Pancreas (tissue), 10 donors: ENCODE measurements at regions of chr10 and their contacts with region 1.

Region 1: GRCh38 chr10:102583435-102584417 is 60.6 kb upstream of the TRIM8 start:
- DNase-seq: peak; percentile 67 to 89 (median 86)
- ATAC-seq: peak; percentile 91 to 99 (median 96)
- H3K4me3 ChIP-seq: no peak overlapping the region
- H3K27ac ChIP-seq: no peak overlapping the region
- H3K4me1 ChIP-seq: no peaks in the 10 kb centered on the region
- H3K27me3 ChIP-seq: no peaks in the 10 kb centered on the region
- CTCF ChIP-seq: peak; percentile 76 to 85 (median 80)

Region 2: DNA sequence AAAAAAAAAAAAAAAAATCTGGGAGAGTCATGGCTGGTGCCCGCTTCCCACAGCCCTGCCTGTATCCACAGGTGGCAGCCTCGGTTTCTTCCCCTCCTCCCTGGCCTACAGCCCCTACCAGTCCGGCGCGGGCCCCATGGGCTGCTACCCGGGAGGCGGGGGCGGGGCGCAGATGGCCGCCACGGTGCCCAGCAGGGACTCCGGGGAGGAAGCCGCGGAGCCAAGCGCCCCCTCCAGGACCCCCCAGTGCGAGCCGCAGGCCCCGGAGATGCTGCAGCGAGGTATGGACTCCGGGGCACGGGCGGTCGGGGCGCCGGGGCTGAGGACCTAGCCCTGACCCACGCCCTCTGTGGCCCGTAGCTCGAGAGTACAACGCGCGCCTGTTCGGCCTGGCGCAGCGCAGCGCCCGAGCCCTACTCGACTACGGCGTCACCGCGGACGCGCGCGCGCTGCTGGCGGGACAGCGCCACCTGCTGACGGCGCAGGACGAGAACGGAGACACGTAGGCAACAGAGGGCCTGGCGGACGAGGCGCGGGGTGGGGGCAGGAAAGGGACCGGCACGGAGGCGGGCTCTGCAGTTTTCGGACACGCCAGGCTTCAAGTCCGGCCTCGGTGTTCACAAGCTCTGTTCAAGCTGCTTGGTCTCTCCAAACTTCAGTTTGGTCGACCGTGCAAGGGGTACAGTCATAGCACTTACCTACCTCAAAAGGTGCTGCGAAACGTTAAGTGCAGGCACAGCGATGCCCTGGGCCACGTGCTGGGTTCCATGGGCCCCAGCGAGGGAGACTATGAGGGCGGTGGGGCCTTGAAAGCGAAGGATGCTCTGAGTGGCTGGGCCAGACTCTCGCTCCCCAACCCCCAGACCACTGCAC is 184.3 kb before region 1 on chr10:
- intact Hi-C with region 1: loop called in 1 of 3 experiments (anchors 10 kb)
- DNase-seq: peak; percentile 86 to 98 (median 92)
- ATAC-seq: peak; percentile 70 to 82 (median 79)
- H3K4me3 ChIP-seq: peak overlapping the region; percentile 33 to 65 (median 54)
- H3K27ac ChIP-seq: peak overlapping the region; percentile 91 to 96 (median 92)
- H3K4me1 ChIP-seq: peaks cover 0 to 26% (median 0%) of the 10 kb centered on the region in 3 donors
- H3K27me3 ChIP-seq: no peaks in the 10 kb centered on the region
- CTCF ChIP-seq: peak; percentile 90 to 97 (median 94)

Region 3: GRCh38 chr10:102503281-102504220 is 80.2 kb before region 1 on chr10 and contains the start of gene SUFU:
- intact Hi-C with region 1: loop called in 1 of 3 experiments (anchors 10 kb)
- DNase-seq: peak; percentile 97 to 99 (median 98)
- ATAC-seq: peak; percentile 71 to 86 (median 78)
- H3K4me3 ChIP-seq: peak within 1 kb of the TSS; percentile 86 to 95 (median 94)
- H3K27ac ChIP-seq: peak within 1 kb of the TSS in 3 of 4 donors; percentile 34 to 69 (median 50)
- H3K4me1 ChIP-seq: peaks cover 6 to 16% (median 12%) of the 10 kb centered on the region in 3 donors
- H3K27me3 ChIP-seq: no peaks in the 10 kb centered on the region
- CTCF ChIP-seq: peak; percentile 87 to 91 (median 90)
- total RNA-seq, gene SUFU: 1.9 to 7.8 (median 3.6) TPM

Region 4: DNA sequence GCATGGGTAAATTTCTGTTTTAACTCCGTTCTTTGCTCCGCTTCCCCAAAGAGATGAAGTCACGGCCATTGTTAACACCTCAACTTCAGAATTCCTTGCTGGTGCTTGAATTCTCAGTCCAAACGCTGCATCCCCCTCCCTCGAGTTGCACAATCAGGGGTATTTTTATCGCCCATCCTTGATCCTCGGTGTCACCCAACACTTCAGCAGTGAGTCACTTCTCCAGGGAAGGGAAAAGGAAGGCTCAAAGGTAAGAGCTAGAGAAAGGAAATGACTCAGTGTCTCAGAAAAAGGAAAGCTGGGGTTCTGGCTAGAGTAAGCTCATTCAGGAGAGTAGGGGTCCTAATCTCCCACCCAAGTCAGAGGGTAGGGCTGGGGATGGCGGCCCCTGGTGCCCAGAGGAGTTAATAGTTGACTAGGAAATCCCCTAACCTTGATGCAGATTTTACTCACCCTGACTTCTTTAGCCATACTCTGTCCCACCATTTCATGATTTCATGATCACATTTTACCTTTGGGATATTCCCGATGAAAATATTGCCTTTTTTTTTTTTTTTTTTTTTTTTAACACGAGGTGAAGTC is 20.7 kb after region 1 on chr10:
- intact Hi-C with region 1: no loop called
- DNase-seq: no peak
- ATAC-seq: peak in 1 of 4 donors; percentile 43
- H3K4me3 ChIP-seq: no peak overlapping the region
- H3K27ac ChIP-seq: peak overlapping the region in 1 of 4 donors; percentile 10
- H3K4me1 ChIP-seq: no peaks in the 10 kb centered on the region
- H3K27me3 ChIP-seq: no peaks in the 10 kb centered on the region
- CTCF ChIP-seq: no peak

Region 5: GRCh38 chr10:102691285-102692066 is 107.8 kb after region 1 on chr10:
- intact Hi-C with region 1: no loop called
- DNase-seq: no peak
- ATAC-seq: no peak
- H3K4me3 ChIP-seq: no peak overlapping the region
- H3K27ac ChIP-seq: no peak overlapping the region
- H3K4me1 ChIP-seq: no peaks in the 10 kb centered on the region
- H3K27me3 ChIP-seq: no peaks in the 10 kb centered on the region
- CTCF ChIP-seq: no peak

Region 6: DNA sequence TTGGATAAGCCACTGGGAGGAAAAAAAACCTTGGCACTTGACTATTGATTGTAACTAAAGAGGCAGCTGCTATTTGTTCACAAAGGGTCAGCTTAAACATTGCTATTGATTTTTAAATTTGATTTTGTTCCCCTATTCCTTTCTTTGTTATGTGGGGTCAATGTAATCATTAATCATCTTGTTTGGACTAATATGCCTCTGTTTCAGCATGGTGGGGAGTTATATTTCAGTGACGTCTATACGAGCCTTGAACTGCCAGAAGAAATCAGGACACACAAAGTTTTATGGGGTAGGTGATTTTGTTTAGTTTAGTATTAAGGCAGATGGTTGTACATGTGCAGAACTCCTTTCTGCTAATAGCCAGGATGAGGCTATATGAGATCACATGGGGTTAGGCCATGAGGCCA is 293.0 kb after region 1 on chr10:
- intact Hi-C with region 1: no loop called
- DNase-seq: no peak
- ATAC-seq: peak; percentile 83 to 90 (median 87)
- H3K4me3 ChIP-seq: no peak overlapping the region
- H3K27ac ChIP-seq: peak overlapping the region in 1 of 4 donors; percentile 19
- H3K4me1 ChIP-seq: peaks cover 7 to 9% (median 8%) of the 10 kb centered on the region in 3 donors
- H3K27me3 ChIP-seq: no peaks in the 10 kb centered on the region
- CTCF ChIP-seq: no peak